ENCODE measurements at regions of chr3 and their contacts with region 1.

Region 1: DNA sequence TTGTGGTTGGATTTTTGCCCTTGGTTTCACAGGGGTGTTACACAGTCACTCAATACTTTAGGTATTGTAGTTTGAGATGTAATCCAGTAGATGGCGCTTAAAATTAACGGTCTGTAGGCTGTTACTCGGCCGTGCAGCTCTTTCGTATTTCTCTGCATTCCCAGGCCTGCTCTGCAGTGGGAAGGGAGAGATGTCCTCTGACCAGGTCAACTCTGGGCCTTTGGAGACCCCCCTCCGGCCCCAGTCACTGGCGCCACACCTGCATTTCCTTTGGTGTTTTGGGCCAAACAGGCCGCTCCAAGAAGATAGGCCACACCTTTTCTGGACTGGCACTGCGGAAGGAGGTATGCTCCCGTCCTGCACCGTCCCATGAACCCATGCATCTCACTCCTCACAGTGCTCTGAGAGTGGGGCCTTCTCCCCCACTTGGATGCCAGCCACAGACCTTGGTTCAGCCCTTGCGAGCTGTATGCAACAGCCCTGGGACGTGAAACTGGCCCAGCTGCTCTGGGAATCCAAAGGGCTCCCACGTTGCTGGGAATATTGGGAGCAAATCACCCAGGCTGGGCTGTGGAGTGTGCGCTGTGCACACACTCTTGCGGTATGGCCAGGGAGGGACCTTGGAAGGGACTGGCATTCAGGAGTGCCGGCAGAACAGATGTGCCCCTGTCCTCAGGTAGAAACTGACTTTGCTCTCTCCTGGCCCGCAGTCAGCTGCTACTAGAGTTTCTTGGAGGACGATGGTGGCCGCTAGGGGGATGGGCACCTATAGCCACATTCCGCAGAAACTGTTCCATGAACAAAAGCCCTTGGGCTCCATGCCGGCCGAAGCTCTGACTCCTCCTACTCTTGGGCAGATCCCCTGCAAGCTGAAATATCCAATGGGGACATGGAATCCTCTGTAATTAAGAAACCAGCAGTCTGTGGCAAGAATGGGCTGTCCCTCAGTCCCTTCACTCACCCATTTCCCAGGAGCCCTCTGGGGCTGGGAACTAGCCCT is 410.5 kb upstream of the CADM2 start:
- DNase-seq: peak; percentile 66
- ATAC-seq: peak; percentile 96
- H3K4me3 ChIP-seq: peak overlapping the region; percentile 37; the same call in 1 of the 2 replicates
- H3K27ac ChIP-seq: peak overlapping the region; percentile 43
- H3K4me1 ChIP-seq: 0 out of 2 replicates have a peak, but pooled peaks cover 7% of the 10 kb centered on the region
- H3K27me3 ChIP-seq: no peaks in the 10 kb centered on the region
- CTCF ChIP-seq: peak; percentile 84

Region 2: DNA sequence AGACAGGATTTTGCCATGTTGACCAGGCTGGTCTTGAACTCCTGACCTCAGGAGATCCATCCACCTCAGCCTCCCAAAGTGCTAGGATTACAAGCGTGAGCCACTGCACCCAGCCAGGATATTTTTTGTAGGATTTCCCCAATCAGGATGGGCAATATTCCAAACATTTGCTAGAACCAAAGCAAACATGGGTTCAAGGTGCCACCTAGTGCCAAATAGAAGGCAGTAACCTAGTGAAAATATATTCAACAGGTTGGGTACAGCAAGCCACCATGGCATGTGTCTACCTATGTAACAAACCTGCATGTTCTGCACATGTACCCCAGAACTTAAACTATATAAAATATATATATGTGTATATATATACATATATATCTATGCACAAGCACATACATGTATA is 224.6 kb after region 1 on chr3:
- CTCF ChIA-PET with region 1: no interaction called
- POLR2A ChIA-PET with region 1: no interaction called
- intact Hi-C with region 1: loop called (anchors 5 kb)
- DNase-seq: peak; percentile 47
- ATAC-seq: no peak; the same call in 1 of the 2 replicates
- H3K4me3 ChIP-seq: no peak overlapping the region
- H3K27ac ChIP-seq: no peak overlapping the region
- H3K4me1 ChIP-seq: no peaks in the 10 kb centered on the region
- H3K27me3 ChIP-seq: no peaks in the 10 kb centered on the region
- CTCF ChIP-seq: peak; percentile 36; the same call in 1 of the 2 replicates

Region 3: GRCh38 chr3:84825817-84826216 is 277.5 kb after region 1 on chr3:
- CTCF ChIA-PET with region 1: interaction called, 3 read pairs
- POLR2A ChIA-PET with region 1: no interaction called
- intact Hi-C with region 1: loop called (anchors 2 kb)
- DNase-seq: peak; percentile 23
- ATAC-seq: 0 out of 2 replicates have a peak, but pooled peaks have one; percentile 42
- H3K4me3 ChIP-seq: no peak overlapping the region
- H3K27ac ChIP-seq: no peak overlapping the region
- H3K4me1 ChIP-seq: peaks cover 13% of the 10 kb centered on the region
- H3K27me3 ChIP-seq: no peaks in the 10 kb centered on the region
- CTCF ChIP-seq: peak; percentile 51

Region 4: GRCh38 chr3:84958495-84959469 is 410.5 kb after region 1 on chr3 and contains the start of gene CADM2:
- CTCF ChIA-PET with region 1: no interaction called
- POLR2A ChIA-PET with region 1: no interaction called
- intact Hi-C with region 1: loop called (anchors 1 kb)
- DNase-seq: peak; percentile 88
- ATAC-seq: peak; percentile 95
- H3K4me3 ChIP-seq: peak within 1 kb of the TSS; percentile 71
- H3K27ac ChIP-seq: no peak within 1 kb of the TSS
- H3K4me1 ChIP-seq: peaks cover 11% of the 10 kb centered on the region
- H3K27me3 ChIP-seq: peaks cover 13% of the 10 kb centered on the region; the same call in 1 of the 2 replicates
- CTCF ChIP-seq: peak; percentile 37; the same call in 1 of the 2 replicates
- total RNA-seq, gene CADM2: 0.47 TPM in 1 of 2 replicates, not detected in the other

Region 5: GRCh38 chr3:84965141-84965540 is 416.9 kb after region 1 on chr3:
- CTCF ChIA-PET with region 1: interaction called, 3 read pairs
- POLR2A ChIA-PET with region 1: no interaction called
- intact Hi-C with region 1: loop called (anchors 1 kb)
- DNase-seq: peak; percentile 47
- ATAC-seq: peak; percentile 94
- H3K4me3 ChIP-seq: no peak overlapping the region
- H3K27ac ChIP-seq: no peak overlapping the region
- H3K4me1 ChIP-seq: 0 out of 2 replicates have a peak, but pooled peaks cover under 1% of the 10 kb centered on the region
- H3K27me3 ChIP-seq: peaks cover 16% of the 10 kb centered on the region
- CTCF ChIP-seq: peak; percentile 60